ENCODE measurements at regions of chr18 and their contacts with region 1.

Region 1: DNA sequence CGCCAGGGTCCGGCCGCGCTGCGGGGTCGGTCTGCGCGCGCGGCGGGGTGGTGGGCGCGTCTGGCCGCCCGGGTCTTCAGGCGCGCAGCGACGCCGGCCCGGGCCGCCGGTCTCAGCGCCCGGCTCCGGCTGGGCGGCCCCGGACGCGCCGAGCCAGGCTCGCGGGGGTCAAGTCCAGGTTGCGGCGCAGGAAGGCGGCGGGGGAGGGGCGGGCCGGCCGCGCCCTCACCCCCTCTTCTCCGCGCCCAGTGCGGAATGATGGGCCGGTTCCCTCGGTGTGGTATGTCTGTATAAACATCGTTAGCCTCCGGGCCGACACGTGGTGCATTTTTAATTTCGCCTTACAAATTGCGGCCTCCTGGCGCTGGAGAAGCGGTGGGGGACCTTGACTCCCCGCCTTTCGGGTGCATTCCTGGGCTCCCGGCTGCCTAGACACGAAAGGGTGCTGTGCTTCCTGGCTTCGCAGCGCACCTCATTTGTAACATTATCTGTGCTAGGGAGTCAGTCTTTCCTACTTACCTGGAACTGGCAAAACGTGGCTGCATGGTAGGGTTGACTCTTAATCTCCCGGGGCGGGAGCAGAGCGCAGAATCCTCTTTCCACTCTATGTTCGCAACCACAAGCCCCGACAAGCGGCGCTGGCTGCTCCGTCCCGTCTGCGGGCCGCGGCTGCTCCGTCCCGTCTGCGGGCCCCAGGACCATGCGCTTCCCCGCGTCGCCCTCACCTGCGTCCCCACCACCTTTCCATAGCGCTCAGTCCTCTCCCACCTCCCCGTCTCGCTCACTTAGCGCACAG is 69.0 kb downstream of the CTAGE1 start:
- DNase-seq: peak; percentile 88

Region 2: GRCh38 chr18:21997207-21998143 is 351.2 kb before region 1 on chr18:
- intact Hi-C with region 1: loop called (anchors 10 kb)
- DNase-seq: no peak

Region 3: DNA sequence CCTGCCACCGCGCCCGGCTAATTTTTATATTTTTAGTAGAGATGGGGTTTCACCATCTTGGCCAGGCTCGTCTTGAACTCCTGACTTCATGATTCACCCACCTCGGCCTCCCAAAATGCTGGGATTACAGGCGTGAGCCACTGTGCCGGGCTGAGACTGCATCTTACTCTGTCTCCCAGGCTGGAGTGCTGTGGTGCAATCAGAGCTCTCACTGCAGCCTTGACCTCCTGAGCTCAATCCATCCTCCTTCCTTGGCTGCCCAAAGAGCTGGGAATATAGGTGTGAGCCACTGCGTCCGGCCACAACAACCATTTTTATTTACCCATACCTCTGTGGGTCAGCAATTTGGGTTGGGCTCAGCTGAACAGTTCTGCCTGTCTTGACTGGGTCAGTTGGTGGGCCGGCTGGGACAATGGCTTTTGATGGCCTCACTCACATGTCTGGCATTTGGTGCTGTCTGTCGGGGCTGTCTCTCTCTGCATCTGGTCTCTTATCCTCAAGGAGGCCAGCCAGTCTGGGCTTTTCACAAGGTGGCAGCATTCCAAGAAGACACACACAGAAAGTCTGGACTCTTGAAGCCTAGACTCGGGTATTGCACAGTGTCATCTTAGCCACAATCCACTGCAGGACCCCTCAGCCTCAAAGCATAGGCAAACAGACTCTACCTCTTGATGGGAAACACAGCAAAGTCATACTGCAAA is 296.2 kb before region 1 on chr18:
- intact Hi-C with region 1: no loop called
- DNase-seq: no peak

Region 4: DNA sequence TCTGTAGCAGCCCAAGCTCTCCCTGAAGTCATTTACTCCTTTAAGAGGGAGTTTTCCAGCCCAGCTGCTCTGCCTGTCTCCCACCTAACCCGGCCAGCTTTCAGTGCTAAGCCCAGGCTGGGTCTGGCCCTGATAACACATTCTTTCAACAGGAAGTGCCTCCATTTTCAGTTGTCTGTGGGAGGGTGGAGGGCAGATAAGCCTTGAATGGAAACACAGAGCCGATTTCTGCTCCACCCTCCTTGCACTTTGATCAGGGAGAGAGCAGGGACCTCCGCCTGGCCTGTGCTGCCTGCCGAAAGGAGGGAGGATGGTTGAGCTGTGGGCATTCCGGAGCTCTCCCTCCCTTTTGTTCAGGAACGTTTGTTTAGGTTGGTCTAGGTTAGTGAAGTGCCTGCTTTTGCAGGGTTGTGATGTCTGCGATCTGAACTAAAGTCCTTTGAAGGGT is 154.5 kb before region 1 on chr18:
- intact Hi-C with region 1: loop called (anchors 2 kb)
- DNase-seq: peak; percentile 79

Region 5: DNA sequence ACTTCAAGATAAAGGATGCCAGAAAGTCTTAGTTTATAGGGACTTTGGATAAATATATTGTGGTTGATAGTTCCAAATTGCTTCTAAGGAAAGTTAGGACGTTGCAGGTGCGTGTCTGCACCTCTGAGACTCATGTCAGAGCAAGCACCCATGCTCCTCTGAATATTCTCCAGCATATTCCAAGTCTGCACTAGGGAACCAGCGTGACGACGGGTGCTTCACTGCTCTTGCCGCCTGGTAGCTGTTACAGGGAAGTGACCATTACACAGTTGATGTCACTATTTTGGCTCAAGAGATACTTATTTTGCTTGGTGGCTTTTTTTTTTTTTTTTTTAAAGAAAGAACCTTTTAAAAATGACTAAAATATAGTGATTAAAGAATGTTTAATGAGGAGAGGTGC is 143.7 kb before region 1 on chr18:
- intact Hi-C with region 1: no loop called
- DNase-seq: no peak

Region 6: DNA sequence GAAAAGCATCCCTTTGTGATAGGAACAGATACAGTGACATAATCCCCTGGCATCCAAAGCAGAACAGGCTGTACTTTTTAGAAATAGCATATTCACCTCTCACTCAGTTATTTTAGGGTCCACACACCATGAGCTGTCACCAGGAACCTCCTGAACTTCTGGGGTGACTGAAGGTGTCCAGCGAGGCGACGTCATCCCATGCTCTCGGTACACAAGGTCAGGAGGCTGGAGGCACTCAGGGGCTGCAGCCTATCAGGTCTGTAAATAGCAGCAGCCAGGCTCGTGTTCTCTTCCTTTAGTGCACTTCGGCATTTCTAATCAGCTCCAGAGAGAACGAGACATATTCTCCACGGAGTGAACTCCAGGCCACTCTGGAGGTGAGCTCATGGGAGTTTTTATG is 81.0 kb before region 1 on chr18:
- intact Hi-C with region 1: loop called (anchors 1 kb)
- DNase-seq: peak; percentile 84

Region 7: GRCh38 chr18:22279741-22280452 is 68.8 kb before region 1 on chr18:
- intact Hi-C with region 1: loop called (anchors 2 kb)
- DNase-seq: no peak

Region 8: DNA sequence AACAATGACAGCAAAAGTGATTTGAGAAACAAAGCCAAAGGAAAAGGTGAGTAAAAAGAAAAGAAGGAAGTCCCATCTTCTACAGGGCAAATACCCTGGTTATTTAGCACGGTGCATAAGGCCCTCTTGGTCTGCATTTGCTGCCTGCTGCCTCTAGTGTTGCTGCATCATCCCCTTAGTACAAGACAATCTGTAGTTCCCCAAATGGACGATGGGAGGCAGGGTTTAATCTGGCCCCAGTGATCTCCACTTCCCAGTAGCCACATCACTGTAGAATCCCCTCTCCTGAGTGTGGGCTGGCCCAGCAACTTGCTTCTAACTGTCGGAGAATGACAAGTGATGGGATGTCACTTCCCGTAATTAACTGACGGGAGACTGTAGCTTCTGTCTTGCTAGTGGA is 16.1 kb before region 1 on chr18:
- intact Hi-C with region 1: no loop called
- DNase-seq: no peak

Region 9: GRCh38 chr18:22471546-22472131 is 122.9 kb after region 1 on chr18:
- intact Hi-C with region 1: loop called (anchors 5 kb)
- DNase-seq: peak; percentile 80